ENCODE measurements at regions of chr5 and their contacts with region 1.

Region 1: GRCh38 chr5:128844354-128844923 is 120.8 kb upstream of the SLC27A6 start:
- DNase-seq: no peak
- ATAC-seq: no peak
- H3K4me3 ChIP-seq: no peak overlapping the region
- H3K27ac ChIP-seq: no peak overlapping the region
- H3K4me1 ChIP-seq: no peaks in the 10 kb centered on the region
- H3K27me3 ChIP-seq: no peaks in the 10 kb centered on the region
- CTCF ChIP-seq: no peak; the same call in 1 of the 2 replicates

Region 2: GRCh38 chr5:127564002-127564769 is 1280.3 kb before region 1 on chr5:
- CTCF ChIA-PET with region 1: no interaction called
- POLR2A ChIA-PET with region 1: no interaction called
- in situ Hi-C with region 1: no loop called
- intact Hi-C with region 1: loop called (anchors 10 kb)
- DNase-seq: peak; percentile 42
- ATAC-seq: peak; percentile 94
- H3K4me3 ChIP-seq: no peak overlapping the region
- H3K27ac ChIP-seq: no peak overlapping the region
- H3K4me1 ChIP-seq: no peaks in the 10 kb centered on the region
- H3K27me3 ChIP-seq: no peaks in the 10 kb centered on the region; the same call in 1 of the 2 replicates
- CTCF ChIP-seq: peak; percentile 72

Region 3: GRCh38 chr5:128667152-128667551 is 177.3 kb before region 1 on chr5:
- CTCF ChIA-PET with region 1: no interaction called
- POLR2A ChIA-PET with region 1: no interaction called
- in situ Hi-C with region 1: no loop called
- intact Hi-C with region 1: loop called (anchors 10 kb)
- DNase-seq: no peak
- ATAC-seq: no peak
- H3K4me3 ChIP-seq: no peak overlapping the region
- H3K27ac ChIP-seq: no peak overlapping the region
- H3K4me1 ChIP-seq: no peaks in the 10 kb centered on the region
- H3K27me3 ChIP-seq: no peaks in the 10 kb centered on the region
- CTCF ChIP-seq: peak; percentile 18; the same call in 1 of the 2 replicates